HEK293T (cell line): ENCODE measurements at regions of chr6 and their contacts with region 1.

Region 1: DNA sequence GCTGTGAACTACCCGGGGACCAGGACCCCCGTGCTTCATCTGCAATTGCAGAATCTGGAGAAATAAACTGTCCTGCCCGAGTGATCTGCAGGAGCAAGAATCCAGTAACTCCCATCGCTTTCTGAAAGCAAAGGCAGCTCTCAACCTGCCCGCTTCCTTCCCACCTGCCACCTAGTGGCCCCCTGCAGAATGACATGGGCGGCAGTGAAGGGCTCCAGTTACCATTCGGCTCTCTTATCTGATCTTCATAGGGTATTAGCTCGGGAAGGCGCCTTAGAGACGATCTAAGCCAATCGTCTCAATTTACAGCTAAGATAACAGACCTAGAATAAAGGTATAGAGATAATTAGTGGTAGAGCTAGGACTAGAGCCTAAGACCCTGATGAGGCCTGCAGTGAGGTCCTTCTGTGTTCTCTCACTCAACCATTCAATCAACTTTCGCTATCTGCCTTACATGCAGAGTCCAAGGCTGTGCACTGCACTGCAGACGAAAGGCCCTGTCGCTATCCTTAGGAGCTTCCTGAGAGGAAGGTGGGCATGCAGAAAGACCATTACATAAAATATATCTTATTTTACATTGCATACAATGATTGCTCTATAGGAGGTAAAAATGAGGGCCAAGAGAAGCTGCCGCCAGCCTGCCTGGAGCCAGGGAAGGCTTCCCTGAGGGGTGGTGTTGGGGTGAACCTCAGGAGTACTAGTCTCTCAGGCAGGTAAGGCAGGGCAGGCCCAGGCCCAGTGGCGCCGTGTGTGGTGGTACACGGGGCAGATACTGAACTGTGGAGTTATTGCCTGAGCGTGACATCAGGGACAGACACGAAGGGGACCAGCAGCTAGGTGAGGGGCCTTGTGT is 7.1 kb upstream of the PSMG4 start:
- DNase-seq: peak; percentile 88

Region 2: GRCh38 chr6:3239110-3239830 is 12.4 kb before region 1 on chr6:
- CTCF ChIA-PET with region 1: interaction called, 18 read pairs
- POLR2A ChIA-PET with region 1: interaction called, 5 read pairs
- DNase-seq: peak; percentile 60